Mammary epithelial cell (primary cell): ENCODE measurements at regions of chr17 and their contacts with region 1.

Region 1: GRCh38 chr17:57597531-57598453 is 147.3 kb downstream of the CCDC182 start:
- DNase-seq: peak; percentile 49
- H3K4me3 ChIP-seq: no peak overlapping the region
- H3K27ac ChIP-seq: no peak overlapping the region
- H3K4me1 ChIP-seq: peaks cover 2% of the 10 kb centered on the region
- H3K27me3 ChIP-seq: no peaks in the 10 kb centered on the region
- CTCF ChIP-seq: peak; percentile 83 to 85

Region 2: GRCh38 chr17:57408071-57408811 is 189.6 kb before region 1 on chr17:
- CTCF ChIA-PET with region 1: interaction called, 10 read pairs
- dilution Hi-C with region 1: no loop called
- in situ Hi-C with region 1: no loop called
- intact Hi-C with region 1: no loop called
- DNase-seq: no peak
- H3K4me3 ChIP-seq: no peak overlapping the region
- H3K27ac ChIP-seq: no peak overlapping the region
- H3K4me1 ChIP-seq: no peaks in the 10 kb centered on the region
- H3K27me3 ChIP-seq: no peaks in the 10 kb centered on the region
- CTCF ChIP-seq: no peak

Region 3: DNA sequence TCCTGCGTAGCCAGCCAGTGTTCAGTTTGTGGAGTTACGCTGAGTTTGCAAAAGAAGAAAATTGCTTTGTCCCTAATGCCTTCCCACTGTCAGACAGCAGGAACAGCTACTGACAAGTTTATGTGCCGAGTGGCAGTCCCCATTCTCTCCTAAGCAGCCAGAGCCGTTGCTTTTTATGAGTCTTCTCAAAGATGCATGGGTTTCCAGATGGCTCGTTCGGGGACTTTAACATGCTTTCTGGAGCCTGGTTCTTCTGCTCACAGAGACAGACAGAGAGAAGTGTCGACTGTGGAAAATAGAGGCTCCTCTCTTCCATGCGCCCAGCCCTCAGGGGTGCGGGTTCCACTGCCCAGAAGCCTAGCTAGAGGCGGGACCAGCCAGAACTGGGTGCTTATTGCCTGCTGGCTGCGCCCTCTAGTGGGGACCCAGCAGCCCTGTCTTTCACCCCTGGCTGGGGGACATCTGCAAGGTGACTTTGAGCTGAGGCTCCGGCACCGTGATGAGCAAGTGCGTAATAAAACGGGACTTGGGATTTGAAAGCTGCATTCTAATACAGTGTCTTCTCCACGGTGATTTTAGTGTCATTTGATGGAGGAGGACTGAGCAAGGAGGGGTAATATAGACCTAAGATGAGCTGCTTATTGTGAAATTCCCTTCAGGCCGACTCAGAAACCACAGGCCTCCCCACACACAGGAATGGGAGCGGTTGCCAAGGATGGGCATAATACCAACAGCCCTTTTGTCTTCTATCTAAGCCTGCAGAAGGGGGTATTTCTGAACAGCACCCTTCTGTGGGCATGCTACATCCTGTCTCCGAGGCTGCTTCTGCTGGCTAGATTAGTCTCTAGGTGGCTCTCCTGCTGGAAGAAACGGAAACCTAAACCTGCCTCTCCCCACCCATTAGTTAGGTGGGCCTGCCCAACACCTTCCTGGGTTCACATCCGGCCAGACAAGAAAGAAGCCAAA is 74.2 kb after region 1 on chr17:
- CTCF ChIA-PET with region 1: interaction called, 6 read pairs
- dilution Hi-C with region 1: loop called (anchors 5 kb)
- in situ Hi-C with region 1: no loop called
- intact Hi-C with region 1: loop called (anchors 1 kb)
- DNase-seq: peak; percentile 93
- H3K4me3 ChIP-seq: no peak overlapping the region
- H3K27ac ChIP-seq: peak overlapping the region; percentile 71
- H3K4me1 ChIP-seq: peaks cover 25% of the 10 kb centered on the region
- H3K27me3 ChIP-seq: no peaks in the 10 kb centered on the region
- CTCF ChIP-seq: peak; percentile 95

Region 4: GRCh38 chr17:57810721-57811637 is 213.2 kb after region 1 on chr17:
- CTCF ChIA-PET with region 1: no interaction called
- dilution Hi-C with region 1: no loop called
- in situ Hi-C with region 1: loop called in 1 of 2 experiments (anchors 25 kb)
- intact Hi-C with region 1: no loop called
- DNase-seq: peak; percentile 21
- H3K4me3 ChIP-seq: no peak overlapping the region
- H3K27ac ChIP-seq: no peak overlapping the region
- H3K4me1 ChIP-seq: peaks cover 20% of the 10 kb centered on the region
- H3K27me3 ChIP-seq: no peaks in the 10 kb centered on the region
- CTCF ChIP-seq: no peak